ENCODE measurements at regions of chr2 and their contacts with region 1.

Region 1: DNA sequence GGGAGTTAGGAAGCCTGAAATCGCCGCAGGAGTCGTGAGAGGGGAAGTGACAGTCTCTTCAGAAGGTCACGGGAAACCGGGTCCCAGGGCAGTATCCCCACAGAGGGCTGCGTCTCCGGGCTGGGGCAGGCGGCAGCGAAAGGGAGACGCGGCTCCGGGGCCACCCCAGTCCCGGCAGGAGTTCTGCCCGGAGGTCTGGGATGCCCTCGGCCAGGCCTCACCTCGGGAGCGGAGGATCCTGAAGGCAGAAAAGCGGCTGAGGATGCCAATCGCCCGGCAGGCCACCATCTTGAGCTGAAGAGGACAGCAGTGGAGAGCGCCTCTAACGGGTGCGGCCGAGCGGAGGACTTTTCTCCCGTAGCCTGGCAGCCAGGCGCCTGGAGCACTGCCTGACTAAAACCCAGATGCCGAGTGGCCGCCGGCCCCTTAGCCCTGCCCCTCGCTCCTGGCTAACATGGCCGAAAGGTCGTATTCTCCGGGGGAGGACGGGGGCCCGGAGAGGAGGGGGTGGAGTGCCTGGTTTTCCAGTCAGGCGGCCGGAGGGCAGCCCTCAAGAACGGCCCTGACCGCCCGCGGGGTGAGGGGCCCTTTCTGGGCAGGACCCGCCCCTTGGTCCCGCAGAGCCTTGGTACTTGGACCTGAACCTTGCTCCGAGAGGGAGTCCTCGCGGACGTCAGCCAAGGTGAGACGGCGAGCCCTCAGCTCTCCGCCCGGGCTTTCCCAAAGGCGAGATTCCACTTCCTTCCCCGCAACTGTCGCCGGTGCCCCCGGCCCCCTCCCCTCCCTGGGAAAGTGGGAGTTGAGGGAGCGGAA is at the starts of genes HADHA and HADHB:
- DNase-seq: peak; percentile 57 to 95
- H3K4me3 ChIP-seq: peak within 1 kb of the TSS; percentile 76 to 90
- H3K27ac ChIP-seq: peak within 1 kb of the TSS; percentile 95 to 96
- H3K4me1 ChIP-seq: peaks cover 2 to 18% of the 10 kb centered on the region in 2 donors
- H3K27me3 ChIP-seq: no peaks in the 10 kb centered on the region
- CTCF ChIP-seq: peak in 2 of 3 experiments; percentile 9 to 37
- total RNA-seq, gene HADHA: 49.5 TPM
- total RNA-seq, gene HADHB: 93.4 TPM

Region 2: DNA sequence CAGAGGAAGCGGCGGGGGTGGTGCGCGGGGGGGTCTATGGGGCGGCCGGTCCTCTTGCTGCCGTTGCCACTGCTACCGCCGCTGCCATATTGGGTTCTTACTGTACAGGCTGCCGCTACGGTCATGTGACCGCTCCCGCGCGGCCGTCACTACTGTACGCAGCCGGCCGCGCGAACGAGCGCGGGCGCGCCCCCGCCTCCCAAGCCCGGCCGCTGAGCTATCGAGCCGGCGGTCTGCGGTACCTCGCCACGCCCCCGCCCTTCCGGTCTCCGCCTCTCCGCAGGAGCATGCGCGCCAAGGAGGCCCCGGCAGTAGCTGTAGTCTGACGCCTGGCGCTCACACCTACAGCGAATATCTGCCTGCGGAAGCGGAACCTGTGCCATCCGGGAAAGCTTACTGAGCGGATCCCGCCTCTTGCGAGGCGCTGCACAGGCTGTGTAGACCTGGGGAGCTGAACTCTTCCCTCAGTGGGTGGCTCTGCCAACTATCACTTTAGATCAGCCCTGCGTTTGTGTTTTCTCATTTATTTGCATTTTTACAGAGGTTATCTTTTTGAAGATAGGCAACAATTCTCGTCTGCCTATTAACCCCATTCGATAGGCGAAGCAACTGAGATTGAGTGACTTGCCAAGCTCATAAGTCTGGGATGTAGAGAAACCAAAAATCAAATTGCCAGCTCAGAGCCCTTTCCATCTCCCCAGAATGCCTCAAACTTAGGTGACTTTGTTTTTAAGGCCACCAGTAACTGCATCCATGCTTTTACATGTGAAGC is 366.0 kb before region 1 on chr2 and contains the start of gene ASXL2:
- intact Hi-C with region 1: loop called (anchors 2 kb)
- DNase-seq: peak; percentile 92 to 98
- H3K4me3 ChIP-seq: peak within 1 kb of the TSS; percentile 70 to 77
- H3K27ac ChIP-seq: peak within 1 kb of the TSS; percentile 81 to 90
- H3K4me1 ChIP-seq: peaks cover 0 to 10% of the 10 kb centered on the region in 2 donors
- H3K27me3 ChIP-seq: no peaks in the 10 kb centered on the region
- CTCF ChIP-seq: no peak
- total RNA-seq, gene ASXL2: 8.7 TPM

Region 3: GRCh38 chr2:26274058-26274613 is 29.6 kb after region 1 on chr2:
- intact Hi-C with region 1: loop called (anchors 2 kb)
- DNase-seq: peak; percentile 18 to 93
- H3K4me3 ChIP-seq: no peak overlapping the region
- H3K27ac ChIP-seq: peak overlapping the region; percentile 64 to 86
- H3K4me1 ChIP-seq: peaks cover 0 to 18% of the 10 kb centered on the region in 2 donors
- H3K27me3 ChIP-seq: no peaks in the 10 kb centered on the region
- CTCF ChIP-seq: no peak

Region 4: GRCh38 chr2:26299471-26300101 is 55.1 kb after region 1 on chr2:
- intact Hi-C with region 1: loop called (anchors 1 kb)
- DNase-seq: peak in 1 of 2 donors; percentile 68
- H3K4me3 ChIP-seq: peak overlapping the region; percentile 59 to 73
- H3K27ac ChIP-seq: peak overlapping the region; percentile 80 to 86
- H3K4me1 ChIP-seq: peaks cover 4 to 14% of the 10 kb centered on the region in 2 donors
- H3K27me3 ChIP-seq: no peaks in the 10 kb centered on the region
- CTCF ChIP-seq: no peak

Region 5: DNA sequence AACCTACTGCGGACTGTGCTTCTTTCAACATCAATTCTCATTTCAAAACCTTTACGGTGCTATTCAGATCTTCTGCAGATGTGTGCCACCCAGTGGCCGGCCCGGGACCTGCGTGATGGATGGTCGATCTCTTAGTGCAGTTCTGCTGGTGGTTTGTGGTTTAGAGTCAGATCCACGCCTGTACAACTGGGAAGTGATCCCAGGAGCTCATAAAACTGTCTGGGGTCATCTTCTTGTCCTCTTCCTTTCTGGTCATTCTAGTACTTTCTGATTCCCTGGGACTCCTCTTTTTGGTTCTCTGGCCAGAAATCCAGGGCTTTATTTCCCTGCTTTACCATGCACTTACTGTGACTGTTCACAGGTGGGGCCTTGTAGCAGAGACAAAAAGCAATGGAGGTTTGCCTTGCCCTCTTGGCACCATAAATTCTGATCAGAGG is 85.6 kb after region 1 on chr2:
- intact Hi-C with region 1: loop called (anchors 2 kb)
- DNase-seq: peak; percentile 66 to 93
- H3K4me3 ChIP-seq: no peak overlapping the region
- H3K27ac ChIP-seq: no peak overlapping the region
- H3K4me1 ChIP-seq: no peaks in the 10 kb centered on the region
- H3K27me3 ChIP-seq: no peaks in the 10 kb centered on the region
- CTCF ChIP-seq: peak; percentile 70 to 90 (median 84)

Region 6: DNA sequence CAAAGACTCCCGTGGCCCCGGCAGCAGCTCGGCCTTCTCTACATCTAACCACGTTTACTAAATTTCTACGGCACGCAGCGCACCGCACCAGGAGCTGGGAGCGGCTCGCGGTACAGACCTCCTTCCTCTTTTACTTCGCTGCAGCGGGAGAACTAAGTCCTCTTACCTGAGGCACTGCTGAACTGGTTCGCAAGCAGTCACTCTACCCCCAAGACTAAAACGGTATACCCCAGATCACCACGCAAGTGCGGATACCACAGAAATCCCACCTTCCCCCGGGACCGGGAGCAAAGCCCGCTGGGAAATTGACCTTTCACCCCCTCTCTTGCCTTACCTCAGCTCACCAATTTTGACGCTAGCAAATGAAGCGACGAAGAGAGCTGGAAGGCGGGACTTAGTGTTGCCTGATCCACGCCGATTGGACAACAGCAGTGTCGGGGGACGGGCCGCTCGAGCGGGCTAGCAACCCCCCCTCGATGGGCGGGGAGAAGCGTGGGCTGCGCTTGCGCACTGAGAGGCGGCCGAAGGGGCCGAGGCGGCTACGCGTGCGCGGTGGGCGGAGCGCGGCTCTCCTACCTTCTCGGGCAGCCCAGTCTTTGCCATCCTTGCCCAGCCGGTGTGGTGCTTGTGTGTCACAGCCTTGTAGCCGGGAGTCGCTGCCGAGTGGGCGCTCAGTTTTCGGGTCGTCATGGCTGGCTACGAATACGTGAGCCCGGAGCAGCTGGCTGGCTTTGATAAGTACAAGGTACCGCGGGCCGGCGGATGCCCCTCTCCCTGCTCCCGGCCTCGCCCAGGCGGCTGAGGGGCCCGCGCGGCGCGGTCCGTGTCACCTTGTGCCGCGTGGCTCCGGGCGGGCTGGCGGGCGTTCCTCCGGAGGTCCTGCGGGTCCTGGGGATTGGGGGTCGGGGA is 101.3 kb after region 1 on chr2 and contains the start of gene SELENOI:
- intact Hi-C with region 1: loop called (anchors 1 kb)
- DNase-seq: peak; percentile 96 to 99
- H3K4me3 ChIP-seq: peak within 1 kb of the TSS; percentile 74 to 94
- H3K27ac ChIP-seq: peak within 1 kb of the TSS; percentile 90 to 94
- H3K4me1 ChIP-seq: peaks cover 6 to 20% of the 10 kb centered on the region in 2 donors
- H3K27me3 ChIP-seq: no peaks in the 10 kb centered on the region
- CTCF ChIP-seq: no peak
- total RNA-seq, gene SELENOI: 2.2 TPM